ENCODE measurements at regions of chr3 and their contacts with region 1.

Region 1: DNA sequence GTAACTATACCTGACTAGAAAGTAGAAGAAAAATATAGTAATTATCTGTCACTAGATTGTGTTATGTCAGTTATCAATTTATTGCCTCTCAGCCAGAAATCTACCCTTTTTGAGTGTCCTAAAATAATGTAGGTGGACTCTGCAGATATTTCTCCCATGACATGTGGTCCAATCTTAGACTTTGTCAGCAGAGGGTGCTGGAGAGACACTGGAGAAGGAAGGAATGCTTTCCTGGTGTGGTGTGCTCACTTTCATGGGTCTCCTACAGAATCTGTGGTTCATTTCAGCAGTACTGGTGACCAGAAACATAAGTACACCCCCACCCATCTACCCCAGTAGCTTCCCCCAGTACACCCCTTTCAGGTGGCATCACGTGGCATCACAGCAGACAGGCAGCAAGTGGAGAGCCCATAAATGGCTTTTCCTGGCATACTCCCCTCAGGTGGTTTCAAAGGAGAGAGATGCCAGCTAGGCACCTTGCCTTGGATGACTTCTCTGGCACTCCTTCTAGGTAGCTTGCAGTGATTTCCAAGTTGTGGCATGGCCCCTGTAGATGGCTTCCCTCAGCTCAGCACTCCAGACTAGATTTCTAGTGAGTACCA is 114.7 kb downstream of the GADL1 start:
- DNase-seq: peak; percentile 49
- H3K4me3 Mint-ChIP-seq: no peak overlapping the region
- H3K27ac Mint-ChIP-seq: no peak overlapping the region
- H3K4me1 Mint-ChIP-seq: peaks cover 8% of the 10 kb centered on the region
- H3K27me3 Mint-ChIP-seq: peaks cover 29% of the 10 kb centered on the region
- CTCF ChIP-seq: peak; percentile 31

Region 2: GRCh38 chr3:30934208-30934550 is 154.4 kb after region 1 on chr3:
- CTCF ChIA-PET with region 1: no interaction called
- intact Hi-C with region 1: loop called (anchors 10 kb)
- DNase-seq: peak; percentile 17
- H3K4me3 Mint-ChIP-seq: no peak overlapping the region
- H3K27ac Mint-ChIP-seq: no peak overlapping the region
- H3K4me1 Mint-ChIP-seq: no peaks in the 10 kb centered on the region
- H3K27me3 Mint-ChIP-seq: peaks cover 9% of the 10 kb centered on the region
- CTCF ChIP-seq: no peak